Activated CD4-positive, alpha-beta memory T cell treated with anti-CD3 and anti-CD28 coated beads for 36 hours (primary cell): ENCODE measurements at regions of chr3 and their contacts with region 1.

Region 1: DNA sequence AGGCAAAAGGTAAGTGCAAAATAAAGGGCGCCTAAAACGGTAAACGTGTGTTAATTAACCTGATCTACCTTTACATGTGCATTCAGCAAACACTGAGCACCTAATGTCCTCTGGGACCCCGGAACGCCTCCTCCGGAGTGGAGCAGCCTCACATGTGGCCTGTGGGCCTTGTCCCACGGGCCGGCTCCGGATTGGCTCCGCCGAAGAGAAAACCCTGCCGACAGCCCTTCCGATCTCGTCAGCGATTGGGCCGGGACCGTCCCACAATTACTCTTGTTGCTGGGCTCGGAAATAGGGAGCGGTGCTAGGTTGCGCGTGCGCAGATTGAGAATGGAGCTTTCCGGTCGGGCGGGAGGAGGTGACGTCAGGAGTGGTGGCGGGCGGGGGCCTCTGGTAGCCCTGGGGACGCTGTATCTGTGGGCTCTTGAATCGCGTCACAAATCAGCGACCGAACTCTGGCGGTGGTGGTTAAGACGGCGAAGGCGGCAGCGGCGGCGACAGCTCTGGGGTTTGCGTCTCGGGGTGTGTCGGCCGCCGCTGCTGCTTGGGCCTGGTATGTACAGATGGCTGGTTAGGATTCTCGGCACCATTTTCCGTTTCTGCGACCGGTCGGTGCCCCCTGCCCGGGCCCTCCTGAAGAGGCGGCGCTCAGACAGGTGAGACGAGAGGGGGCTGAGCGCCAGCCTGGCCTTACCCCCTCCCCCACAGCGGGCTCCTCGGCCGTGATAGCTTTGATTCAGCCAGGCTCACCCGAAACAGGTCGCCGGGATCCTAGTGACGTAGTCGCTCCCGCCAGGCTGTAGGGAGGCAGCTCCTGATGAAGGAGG is at the start of gene SENP2:
- DNase-seq: peak; percentile 100
- H3K4me3 Mint-ChIP-seq: peak within 1 kb of the TSS; percentile 88
- H3K27ac Mint-ChIP-seq: peak within 1 kb of the TSS; percentile 90
- H3K4me1 Mint-ChIP-seq: peaks cover 27% of the 10 kb centered on the region
- H3K27me3 Mint-ChIP-seq: peaks cover 3% of the 10 kb centered on the region
- total RNA-seq, gene SENP2: 29.2 to 29.6 TPM

Region 2: DNA sequence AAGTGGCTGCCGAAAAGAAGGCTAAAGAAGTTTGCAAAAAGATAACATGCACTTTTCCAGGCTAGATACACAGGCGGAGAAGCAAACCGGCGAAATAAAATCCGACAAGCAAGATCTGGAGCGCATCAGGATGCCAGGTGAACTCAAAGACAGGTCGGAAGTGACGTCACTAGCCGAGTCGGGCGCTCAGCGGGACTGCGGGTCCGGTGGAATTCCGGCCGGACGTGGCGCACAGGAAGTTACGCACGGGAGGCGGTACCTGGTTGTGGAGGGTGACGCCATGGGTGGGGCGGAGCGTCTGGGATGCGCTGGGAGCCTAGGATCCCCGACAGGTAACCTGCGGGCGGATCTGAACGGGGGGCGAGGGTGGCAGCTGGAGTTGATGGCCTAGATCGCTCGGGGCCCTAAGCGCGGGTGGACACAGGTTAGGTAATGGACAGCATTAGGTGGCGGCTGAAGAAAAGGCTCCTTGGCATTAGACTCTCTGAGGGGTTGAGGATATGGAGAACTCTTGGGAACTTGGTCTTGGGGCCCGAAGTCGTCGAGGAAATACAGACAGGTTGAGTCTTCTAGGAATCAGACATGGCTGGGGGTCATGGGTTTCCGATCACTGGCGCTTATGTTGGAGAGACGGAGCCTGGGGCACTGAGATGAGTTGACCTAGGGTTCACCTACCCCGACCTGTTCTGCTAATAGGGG is 303.2 kb before region 1 on chr3:
- CTCF ChIA-PET with region 1: no interaction called
- POLR2A ChIA-PET with region 1: no interaction called
- intact Hi-C with region 1: loop called (anchors 2 kb)
- DNase-seq: peak; percentile 96
- H3K4me3 Mint-ChIP-seq: peak overlapping the region; percentile 99
- H3K27ac Mint-ChIP-seq: peak overlapping the region; percentile 86
- H3K4me1 Mint-ChIP-seq: peaks cover 23% of the 10 kb centered on the region
- H3K27me3 Mint-ChIP-seq: peaks cover 10% of the 10 kb centered on the region

Region 3: DNA sequence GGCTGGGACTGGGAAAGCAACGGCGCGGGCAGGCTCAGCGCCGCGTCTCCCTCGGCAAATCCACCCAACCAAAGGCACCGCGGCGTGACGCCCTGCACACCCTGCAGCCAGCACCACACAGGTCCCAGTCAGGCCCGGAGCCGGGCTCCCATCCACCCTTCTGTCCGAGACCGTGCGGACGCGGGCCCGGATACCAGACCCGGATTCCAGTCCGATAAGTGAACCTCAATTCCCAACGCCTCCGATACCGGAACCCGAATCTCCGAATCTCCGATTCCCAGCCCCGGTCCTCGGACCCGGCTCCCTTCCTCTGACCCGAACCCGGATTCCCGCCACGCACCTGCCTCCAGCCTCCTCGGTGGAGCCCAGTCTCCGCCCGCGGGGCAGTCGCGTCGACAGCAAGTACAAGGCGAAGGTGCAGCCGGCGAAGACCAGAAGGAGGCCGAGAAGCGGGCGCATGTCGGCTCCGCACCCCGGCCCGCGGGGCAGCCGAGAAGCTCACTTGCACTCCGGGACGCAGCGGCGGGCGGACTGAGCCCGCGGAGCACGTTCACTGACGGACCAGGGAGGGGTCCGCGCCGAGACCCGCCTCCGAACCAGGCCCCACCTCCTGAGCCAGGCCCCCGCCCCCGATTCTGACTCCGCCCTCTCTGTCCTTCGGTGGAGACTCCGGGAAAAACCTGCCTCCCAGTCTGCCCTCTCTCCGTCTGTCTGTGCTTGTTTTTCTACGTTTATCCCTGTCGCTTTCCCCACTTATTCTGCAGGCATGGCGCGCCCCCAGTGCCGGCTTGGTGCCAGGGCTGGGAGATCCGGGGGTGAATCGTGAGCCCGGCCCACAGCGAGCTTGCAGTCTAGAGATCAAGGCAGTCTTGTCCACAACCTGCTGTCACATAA is 87.3 kb before region 1 on chr3 and contains the start of gene TMEM41A:
- CTCF ChIA-PET with region 1: no interaction called
- POLR2A ChIA-PET with region 1: interaction called, 10 read pairs
- intact Hi-C with region 1: loop called (anchors 1 kb)
- DNase-seq: peak; percentile 94
- H3K4me3 Mint-ChIP-seq: peak within 1 kb of the TSS; percentile 94
- H3K27ac Mint-ChIP-seq: peak within 1 kb of the TSS; percentile 78
- H3K4me1 Mint-ChIP-seq: peaks cover 16% of the 10 kb centered on the region
- H3K27me3 Mint-ChIP-seq: peaks cover 2% of the 10 kb centered on the region
- total RNA-seq, gene TMEM41A: 16.2 to 16.8 TPM

Region 4: GRCh38 chr3:185572183-185572582 is 13.9 kb before region 1 on chr3:
- CTCF ChIA-PET with region 1: interaction called, 17 read pairs
- POLR2A ChIA-PET with region 1: interaction called, 3 read pairs
- intact Hi-C with region 1: no loop called
- DNase-seq: no peak
- H3K4me3 Mint-ChIP-seq: no peak overlapping the region
- H3K27ac Mint-ChIP-seq: no peak overlapping the region
- H3K4me1 Mint-ChIP-seq: peaks cover 3% of the 10 kb centered on the region
- H3K27me3 Mint-ChIP-seq: no peaks in the 10 kb centered on the region

Region 5: DNA sequence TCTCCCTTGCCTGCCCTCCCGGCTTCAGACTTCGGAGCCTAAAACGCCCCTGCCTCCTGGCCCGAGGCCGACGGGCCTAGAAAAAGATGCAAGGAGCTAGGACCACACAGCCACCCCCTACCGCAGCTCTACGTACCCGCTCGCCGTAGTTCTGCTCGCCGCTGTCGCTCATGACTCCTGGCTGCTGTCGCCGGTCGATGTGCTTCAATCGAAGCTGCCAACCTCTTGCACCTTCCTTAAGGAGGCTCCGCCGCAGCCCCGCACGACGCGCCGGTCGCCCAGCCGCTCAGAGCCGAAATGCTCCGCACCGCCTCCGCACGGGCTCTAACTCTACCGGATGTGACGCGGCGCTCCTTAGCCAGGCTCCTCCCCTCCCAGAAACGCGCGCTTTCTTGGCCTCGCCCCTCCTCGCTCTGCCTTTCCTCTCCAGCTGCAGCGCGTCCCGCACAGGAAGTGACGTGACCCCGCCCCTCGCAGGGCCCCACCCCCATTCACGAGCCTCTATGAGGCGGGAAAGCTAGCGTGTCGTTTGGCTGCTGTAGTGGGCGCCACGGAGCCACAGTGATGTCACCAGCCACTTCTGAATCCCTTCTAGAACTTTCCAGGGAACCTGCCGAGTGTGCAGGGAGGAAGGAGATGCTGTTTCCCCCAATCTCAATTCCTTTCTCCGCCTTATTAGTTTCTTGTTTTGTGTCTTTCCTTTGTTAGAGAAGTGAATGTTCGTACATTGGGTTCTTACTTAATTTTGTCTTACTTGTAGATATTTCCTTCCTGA is 351.8 kb after region 1 on chr3 and contains the start of gene TRA2B:
- CTCF ChIA-PET with region 1: no interaction called
- POLR2A ChIA-PET with region 1: no interaction called
- intact Hi-C with region 1: loop called (anchors 5 kb)
- DNase-seq: peak; percentile 99
- H3K4me3 Mint-ChIP-seq: peak within 1 kb of the TSS; percentile 99
- H3K27ac Mint-ChIP-seq: peak within 1 kb of the TSS; percentile 99
- H3K4me1 Mint-ChIP-seq: peaks cover 21% of the 10 kb centered on the region
- H3K27me3 Mint-ChIP-seq: peaks cover 3% of the 10 kb centered on the region
- total RNA-seq, gene TRA2B: 184 to 187 TPM